CD4-positive, alpha-beta memory T cell (primary cell): ENCODE measurements at regions of chr7 and their contacts with region 1.

Region 1: DNA sequence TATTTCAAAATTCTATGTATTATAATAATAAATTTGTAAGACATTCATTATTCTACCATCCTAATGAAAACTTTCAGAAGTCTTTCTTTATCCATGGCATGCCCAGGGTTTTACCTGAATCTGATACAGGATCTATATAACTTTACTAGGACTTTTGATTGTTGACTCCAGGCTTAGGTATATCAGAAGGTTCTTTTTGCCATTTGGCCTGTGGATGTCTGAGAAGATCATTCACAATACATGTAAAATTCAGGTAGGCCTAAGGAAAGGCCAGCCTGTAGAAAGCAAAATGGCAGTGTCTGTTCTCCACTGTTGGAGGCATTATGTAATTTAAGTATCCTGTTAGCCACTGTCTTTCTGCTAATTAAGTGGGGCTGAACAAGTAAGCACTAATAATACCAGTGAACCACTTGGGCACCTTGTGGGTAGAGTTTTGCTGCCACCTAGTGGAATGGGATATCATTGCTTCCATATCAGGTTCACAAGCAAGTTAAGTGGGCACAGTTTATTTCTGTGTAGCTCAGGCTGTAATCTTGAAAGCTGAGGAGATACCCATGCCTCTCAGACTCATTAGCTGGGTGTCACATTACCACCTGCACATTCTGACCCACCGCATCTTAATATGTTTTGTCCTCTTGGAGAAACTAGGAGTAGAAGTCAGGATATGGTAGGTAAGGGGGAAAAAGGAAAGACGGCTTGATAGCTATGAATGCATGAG is 105.5 kb downstream of the SEPTIN7 start:
- DNase-seq: peak; percentile 70 to 78 (median 73)
- H3K4me3 ChIP-seq: no peak overlapping the region
- H3K4me3 Mint-ChIP-seq: no peak overlapping the region
- H3K27ac ChIP-seq: no peak overlapping the region
- H3K27ac Mint-ChIP-seq: peak overlapping the region in 5 of 7 donors; percentile 2 to 69 (median 36)
- H3K4me1 ChIP-seq: no peaks in the 10 kb centered on the region
- H3K4me1 Mint-ChIP-seq: peaks cover 0 to 6% (median 3%) of the 10 kb centered on the region in 4 donors
- H3K27me3 ChIP-seq: no peaks in the 10 kb centered on the region
- H3K27me3 Mint-ChIP-seq: no peaks in the 10 kb centered on the region

Region 2: DNA sequence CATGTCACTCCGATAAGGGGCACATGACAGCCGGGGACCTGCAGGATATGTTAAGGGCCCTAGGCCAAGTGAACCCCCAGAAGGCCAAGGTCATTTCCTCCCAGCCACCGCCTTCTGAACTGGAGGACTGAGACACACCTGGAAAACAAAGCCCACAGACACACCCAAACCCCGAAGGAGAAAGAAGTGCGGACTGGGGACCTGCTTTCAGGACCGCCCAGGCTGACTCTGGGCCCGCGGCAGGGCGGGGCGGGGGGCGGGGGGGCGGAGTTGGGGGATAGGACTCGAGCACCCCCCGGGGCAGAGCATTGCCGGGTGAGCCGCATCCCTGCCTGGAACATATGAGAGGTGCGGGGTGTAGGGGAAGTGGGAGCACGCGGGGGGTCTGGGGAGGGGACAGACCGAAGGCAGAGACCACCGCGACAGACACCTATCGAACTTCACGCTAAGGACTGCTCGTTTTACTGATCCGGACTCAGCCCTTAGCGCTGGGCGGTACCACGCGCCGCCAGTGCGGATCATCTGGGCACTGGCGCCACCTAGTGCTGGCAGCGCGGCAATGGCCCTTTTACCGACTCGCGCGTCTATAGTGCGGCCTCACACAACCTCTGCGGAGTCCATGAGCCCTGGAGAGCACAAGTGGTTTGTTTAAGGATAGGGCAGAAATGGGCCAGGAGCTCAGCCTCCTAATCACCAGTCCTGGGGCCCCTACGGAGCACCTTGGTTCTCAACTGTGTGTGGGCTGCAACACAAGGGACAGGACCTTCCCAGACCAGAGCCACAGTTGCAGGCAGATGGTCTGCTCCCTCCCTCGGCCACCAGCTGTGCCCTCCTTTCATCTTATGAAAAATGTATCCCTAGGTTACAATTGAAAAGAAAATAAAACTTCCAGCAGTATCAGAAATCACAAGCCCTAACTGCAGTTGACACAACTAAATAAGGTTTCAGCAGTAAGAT is 369.0 kb before region 1 on chr7:
- CTCF ChIA-PET with region 1: no interaction called
- POLR2A ChIA-PET with region 1: no interaction called
- intact Hi-C with region 1: loop called (anchors 1 kb)
- DNase-seq: peak; percentile 68 to 78 (median 75)
- H3K4me3 ChIP-seq: peak overlapping the region in 1 of 2 donors; percentile 31
- H3K4me3 Mint-ChIP-seq: peak overlapping the region; percentile 77 to 93 (median 84)
- H3K27ac ChIP-seq: no peak overlapping the region
- H3K27ac Mint-ChIP-seq: peak overlapping the region in 2 of 7 donors; percentile 32 to 80
- H3K4me1 ChIP-seq: no peaks in the 10 kb centered on the region
- H3K4me1 Mint-ChIP-seq: peaks cover 0 to 3% (median under 1%) of the 10 kb centered on the region in 4 donors
- H3K27me3 ChIP-seq: no peaks in the 10 kb centered on the region
- H3K27me3 Mint-ChIP-seq: peaks cover 3 to 7% of the 10 kb centered on the region in 2 donors

Region 3: DNA sequence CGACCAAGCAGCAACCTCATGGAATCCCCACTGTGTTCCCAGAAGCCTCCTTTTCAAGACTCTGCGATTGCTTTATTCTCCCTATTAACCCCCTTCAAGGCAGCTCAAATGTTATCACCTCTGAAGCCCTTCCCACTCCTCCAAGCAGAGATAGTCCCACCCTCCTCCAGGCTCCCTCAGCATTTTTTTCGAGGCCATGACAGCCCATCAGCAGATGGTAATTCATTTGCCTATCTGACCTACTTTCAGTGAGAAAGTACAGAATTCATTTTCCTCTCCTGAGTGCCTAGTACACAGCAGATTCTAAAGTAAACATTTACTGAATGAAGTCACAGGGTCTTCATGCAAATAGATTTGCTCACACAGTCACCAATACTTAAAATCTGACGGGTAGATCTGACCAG is 259.2 kb before region 1 on chr7:
- CTCF ChIA-PET with region 1: interaction called, 6 read pairs
- POLR2A ChIA-PET with region 1: no interaction called
- intact Hi-C with region 1: loop called (anchors 5 kb)
- DNase-seq: no peak
- H3K4me3 ChIP-seq: no peak overlapping the region
- H3K4me3 Mint-ChIP-seq: peak overlapping the region in 7 of 8 donors; percentile 10 to 64 (median 38)
- H3K27ac ChIP-seq: no peak overlapping the region
- H3K27ac Mint-ChIP-seq: peak overlapping the region in 6 of 7 donors; percentile 8 to 84 (median 32)
- H3K4me1 ChIP-seq: peaks cover 70% of the 10 kb centered on the region
- H3K4me1 Mint-ChIP-seq: peaks cover 52 to 90% (median 76%) of the 10 kb centered on the region in 4 donors
- H3K27me3 ChIP-seq: no peaks in the 10 kb centered on the region
- H3K27me3 Mint-ChIP-seq: no peaks in the 10 kb centered on the region

Region 4: GRCh38 chr7:35707422-35707821 is 198.9 kb before region 1 on chr7:
- CTCF ChIA-PET with region 1: interaction called, 48 read pairs
- POLR2A ChIA-PET with region 1: interaction called, 4 read pairs
- intact Hi-C with region 1: loop called (anchors 1 kb)
- DNase-seq: no peak
- H3K4me3 ChIP-seq: no peak overlapping the region
- H3K4me3 Mint-ChIP-seq: peak overlapping the region in 1 of 8 donors; percentile 20
- H3K27ac ChIP-seq: no peak overlapping the region
- H3K27ac Mint-ChIP-seq: peak overlapping the region in 2 of 7 donors; percentile 16 to 17
- H3K4me1 ChIP-seq: peaks cover 15% of the 10 kb centered on the region
- H3K4me1 Mint-ChIP-seq: peaks cover 9 to 24% (median 18%) of the 10 kb centered on the region in 4 donors
- H3K27me3 ChIP-seq: no peaks in the 10 kb centered on the region
- H3K27me3 Mint-ChIP-seq: no peaks in the 10 kb centered on the region

Region 5: DNA sequence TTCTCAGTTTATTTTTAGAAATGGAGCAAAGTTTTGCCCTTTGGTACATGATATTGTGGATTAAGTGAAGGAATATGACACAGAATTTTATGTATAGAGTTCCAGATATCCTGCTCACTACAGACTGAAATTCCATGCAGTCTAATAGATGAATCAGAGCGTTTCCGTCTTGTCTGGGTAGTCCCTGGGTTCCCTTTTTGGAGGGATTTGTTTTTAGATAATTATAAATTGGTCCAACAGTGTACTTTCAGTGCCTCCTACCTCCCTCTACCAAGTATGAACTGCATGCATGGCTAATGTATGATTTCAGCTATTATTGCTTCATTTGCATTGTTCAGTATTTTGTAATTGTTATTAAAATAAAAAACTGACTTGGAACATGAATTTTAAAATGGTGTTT is 31.1 kb before region 1 on chr7:
- CTCF ChIA-PET with region 1: no interaction called
- POLR2A ChIA-PET with region 1: no interaction called
- intact Hi-C with region 1: no loop called
- DNase-seq: no peak
- H3K4me3 ChIP-seq: no peak overlapping the region
- H3K4me3 Mint-ChIP-seq: no peak overlapping the region
- H3K27ac ChIP-seq: no peak overlapping the region
- H3K27ac Mint-ChIP-seq: peak overlapping the region in 1 of 7 donors; percentile 22
- H3K4me1 ChIP-seq: peaks cover 9% of the 10 kb centered on the region
- H3K4me1 Mint-ChIP-seq: peaks cover 10 to 19% (median 17%) of the 10 kb centered on the region in 4 donors
- H3K27me3 ChIP-seq: no peaks in the 10 kb centered on the region
- H3K27me3 Mint-ChIP-seq: no peaks in the 10 kb centered on the region

Region 6: DNA sequence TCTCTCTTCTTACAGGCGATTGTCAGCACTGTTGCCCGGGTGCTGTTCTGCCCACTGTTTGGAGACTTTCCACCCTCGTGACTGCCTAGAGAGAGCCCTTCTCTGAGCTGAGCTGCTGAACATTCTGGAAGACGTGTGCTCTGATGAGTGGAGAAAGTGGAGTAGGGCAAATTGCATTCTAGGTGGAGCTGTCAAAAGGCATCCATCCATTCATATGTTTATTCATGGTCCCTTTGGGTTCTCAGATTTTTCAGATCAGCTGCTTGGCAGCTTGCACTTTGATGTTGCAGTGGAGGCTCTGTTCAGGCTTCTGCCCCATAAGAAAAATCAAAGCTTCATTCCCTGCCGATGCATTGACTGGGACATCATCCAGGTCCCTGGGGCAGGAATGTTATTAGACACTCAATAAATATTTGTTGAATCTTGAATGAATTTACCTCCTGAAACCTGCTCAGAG is 126.0 kb after region 1 on chr7:
- CTCF ChIA-PET with region 1: no interaction called
- POLR2A ChIA-PET with region 1: no interaction called
- intact Hi-C with region 1: no loop called
- DNase-seq: no peak
- H3K4me3 ChIP-seq: no peak overlapping the region
- H3K4me3 Mint-ChIP-seq: no peak overlapping the region
- H3K27ac ChIP-seq: no peak overlapping the region
- H3K27ac Mint-ChIP-seq: no peak overlapping the region
- H3K4me1 ChIP-seq: peaks cover 3% of the 10 kb centered on the region
- H3K4me1 Mint-ChIP-seq: peaks cover 0 to 11% (median 2%) of the 10 kb centered on the region in 4 donors
- H3K27me3 ChIP-seq: no peaks in the 10 kb centered on the region
- H3K27me3 Mint-ChIP-seq: peaks cover 13 to 15% of the 10 kb centered on the region in 2 donors

Region 7: GRCh38 chr7:36096460-36097095 is 190.2 kb after region 1 on chr7:
- CTCF ChIA-PET with region 1: no interaction called
- POLR2A ChIA-PET with region 1: no interaction called
- intact Hi-C with region 1: no loop called
- DNase-seq: no peak
- H3K4me3 ChIP-seq: no peak overlapping the region
- H3K4me3 Mint-ChIP-seq: no peak overlapping the region
- H3K27ac ChIP-seq: no peak overlapping the region
- H3K27ac Mint-ChIP-seq: no peak overlapping the region
- H3K4me1 ChIP-seq: no peaks in the 10 kb centered on the region
- H3K4me1 Mint-ChIP-seq: no peaks in the 10 kb centered on the region
- H3K27me3 ChIP-seq: no peaks in the 10 kb centered on the region
- H3K27me3 Mint-ChIP-seq: peaks cover 0 to 5% of the 10 kb centered on the region in 2 donors

Region 8: DNA sequence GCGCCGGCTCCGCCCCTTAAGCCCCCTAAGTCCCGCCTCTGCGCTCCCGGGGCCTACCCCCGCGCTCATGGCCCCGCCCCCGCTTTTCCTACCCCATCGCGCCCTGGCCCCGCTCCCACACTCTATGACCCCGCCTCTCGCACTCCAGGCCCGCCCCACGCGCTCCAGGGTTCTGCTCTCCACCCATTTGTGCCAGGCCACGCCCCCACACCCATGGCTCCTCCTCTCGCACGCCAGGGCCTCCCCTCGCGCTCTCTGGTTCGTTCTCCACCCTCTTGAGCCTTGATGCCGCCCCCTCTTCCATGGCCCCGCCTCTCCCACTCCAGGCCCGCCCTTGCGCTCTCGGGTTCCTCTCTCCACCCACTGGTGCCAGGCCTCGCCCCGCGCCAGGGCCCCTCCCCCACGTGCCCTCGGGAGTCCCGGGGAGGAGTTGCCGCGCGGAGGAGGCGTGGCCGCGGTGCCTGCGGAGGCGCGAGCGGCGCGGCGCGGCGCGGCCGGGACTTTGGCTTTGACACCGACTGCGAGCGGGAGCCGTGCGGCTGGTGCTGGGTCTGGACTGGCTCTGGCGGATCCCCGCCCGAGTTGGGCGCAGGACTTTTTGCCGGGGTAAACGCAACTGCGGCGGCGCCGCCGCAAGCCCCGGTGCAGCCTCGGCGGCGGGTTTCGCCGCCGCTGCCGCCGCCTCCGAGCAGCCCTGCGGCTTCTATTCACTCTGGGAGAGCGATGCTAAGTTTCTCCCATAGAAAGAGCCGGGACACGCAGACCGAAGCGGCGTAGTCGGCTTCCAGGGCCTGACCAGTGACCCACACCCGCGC is 246.6 kb after region 1 on chr7 and contains the start of gene EEPD1:
- CTCF ChIA-PET with region 1: no interaction called
- POLR2A ChIA-PET with region 1: no interaction called
- intact Hi-C with region 1: loop called (anchors 10 kb)
- DNase-seq: peak; percentile 99 to 100 (median 100)
- H3K4me3 ChIP-seq: peak within 1 kb of the TSS; percentile 63 to 72
- H3K4me3 Mint-ChIP-seq: peak within 1 kb of the TSS; percentile 81 to 87 (median 84)
- H3K27ac ChIP-seq: peak within 1 kb of the TSS; percentile 53
- H3K27ac Mint-ChIP-seq: peak within 1 kb of the TSS; percentile 46 to 82 (median 73)
- H3K4me1 ChIP-seq: peaks cover 44% of the 10 kb centered on the region
- H3K4me1 Mint-ChIP-seq: peaks cover 17 to 48% (median 42%) of the 10 kb centered on the region in 4 donors
- H3K27me3 ChIP-seq: no peaks in the 10 kb centered on the region
- H3K27me3 Mint-ChIP-seq: no peaks in the 10 kb centered on the region
- total RNA-seq, gene EEPD1: 6.3 to 8.0 TPM